ENCODE measurements at regions of chr1 and their contacts with region 1.

Region 1: DNA sequence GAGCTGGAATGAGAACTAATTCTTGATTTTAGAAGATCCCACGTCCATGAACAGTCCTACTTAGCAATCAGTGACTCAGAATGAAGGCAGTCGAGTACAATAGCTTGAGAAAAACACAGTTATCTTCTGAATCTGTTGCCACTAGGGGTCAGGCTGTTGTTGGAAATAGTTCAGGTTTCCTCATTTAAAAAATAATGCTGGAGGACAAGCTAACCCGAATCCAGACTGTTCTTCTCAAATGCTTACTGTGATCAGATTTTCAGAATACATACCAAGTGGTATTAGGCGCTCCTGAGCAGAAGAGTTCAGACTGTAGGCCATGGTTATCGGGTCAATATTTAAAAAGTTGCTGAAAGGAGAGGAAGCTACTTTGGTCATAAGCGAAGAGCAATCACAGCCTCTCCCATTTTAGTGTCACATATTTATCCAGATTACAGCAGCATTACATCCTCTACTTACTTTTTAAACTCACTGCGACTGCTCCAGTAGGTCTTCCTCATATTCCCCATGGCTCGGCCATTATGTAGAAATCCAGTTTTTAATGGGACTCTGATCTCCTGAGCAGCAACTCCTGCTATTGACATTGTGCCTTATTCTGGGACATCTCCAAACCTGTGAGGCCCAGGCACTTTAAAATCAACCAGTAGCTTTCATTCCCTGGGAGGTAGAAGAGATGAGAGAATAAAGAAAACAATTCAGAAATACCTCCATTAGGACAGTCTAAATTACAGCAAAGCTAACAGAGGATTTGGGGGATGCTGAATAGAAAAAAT is 10.9 kb downstream of the ERRFI1 start:
- DNase-seq: peak in 4 of 5 donors; percentile 55 to 59 (median 58)
- H3K4me3 ChIP-seq: no peak overlapping the region
- H3K4me3 Mint-ChIP-seq: no peak overlapping the region
- H3K27ac ChIP-seq: no peak overlapping the region
- H3K27ac Mint-ChIP-seq: no peak overlapping the region
- H3K4me1 ChIP-seq: no peaks in the 10 kb centered on the region
- H3K4me1 Mint-ChIP-seq: peaks cover 0 to 1% (median under 1%) of the 10 kb centered on the region in 4 donors
- H3K27me3 ChIP-seq: no peaks in the 10 kb centered on the region
- H3K27me3 Mint-ChIP-seq: peaks cover 10 to 18% of the 10 kb centered on the region in 2 donors

Region 2: GRCh38 chr1:7983086-7983778 is 32.0 kb before region 1 on chr1:
- CTCF ChIA-PET with region 1: interaction called, 13 read pairs
- POLR2A ChIA-PET with region 1: no interaction called
- intact Hi-C with region 1: no loop called
- DNase-seq: no peak
- H3K4me3 ChIP-seq: no peak overlapping the region
- H3K4me3 Mint-ChIP-seq: no peak overlapping the region
- H3K27ac ChIP-seq: no peak overlapping the region
- H3K27ac Mint-ChIP-seq: peak overlapping the region in 1 of 7 donors; percentile 62
- H3K4me1 ChIP-seq: peaks cover 5% of the 10 kb centered on the region
- H3K4me1 Mint-ChIP-seq: peaks cover 6 to 10% (median 8%) of the 10 kb centered on the region in 4 donors
- H3K27me3 ChIP-seq: no peaks in the 10 kb centered on the region
- H3K27me3 Mint-ChIP-seq: no peaks in the 10 kb centered on the region

Region 3: GRCh38 chr1:8174807-8175206 is 159.6 kb after region 1 on chr1:
- CTCF ChIA-PET with region 1: no interaction called
- POLR2A ChIA-PET with region 1: no interaction called
- intact Hi-C with region 1: no loop called
- DNase-seq: no peak
- H3K4me3 ChIP-seq: no peak overlapping the region
- H3K4me3 Mint-ChIP-seq: no peak overlapping the region
- H3K27ac ChIP-seq: no peak overlapping the region
- H3K27ac Mint-ChIP-seq: no peak overlapping the region
- H3K4me1 ChIP-seq: peaks cover 9% of the 10 kb centered on the region
- H3K4me1 Mint-ChIP-seq: peaks cover 8 to 18% (median 12%) of the 10 kb centered on the region in 4 donors
- H3K27me3 ChIP-seq: no peaks in the 10 kb centered on the region
- H3K27me3 Mint-ChIP-seq: no peaks in the 10 kb centered on the region

Region 4: DNA sequence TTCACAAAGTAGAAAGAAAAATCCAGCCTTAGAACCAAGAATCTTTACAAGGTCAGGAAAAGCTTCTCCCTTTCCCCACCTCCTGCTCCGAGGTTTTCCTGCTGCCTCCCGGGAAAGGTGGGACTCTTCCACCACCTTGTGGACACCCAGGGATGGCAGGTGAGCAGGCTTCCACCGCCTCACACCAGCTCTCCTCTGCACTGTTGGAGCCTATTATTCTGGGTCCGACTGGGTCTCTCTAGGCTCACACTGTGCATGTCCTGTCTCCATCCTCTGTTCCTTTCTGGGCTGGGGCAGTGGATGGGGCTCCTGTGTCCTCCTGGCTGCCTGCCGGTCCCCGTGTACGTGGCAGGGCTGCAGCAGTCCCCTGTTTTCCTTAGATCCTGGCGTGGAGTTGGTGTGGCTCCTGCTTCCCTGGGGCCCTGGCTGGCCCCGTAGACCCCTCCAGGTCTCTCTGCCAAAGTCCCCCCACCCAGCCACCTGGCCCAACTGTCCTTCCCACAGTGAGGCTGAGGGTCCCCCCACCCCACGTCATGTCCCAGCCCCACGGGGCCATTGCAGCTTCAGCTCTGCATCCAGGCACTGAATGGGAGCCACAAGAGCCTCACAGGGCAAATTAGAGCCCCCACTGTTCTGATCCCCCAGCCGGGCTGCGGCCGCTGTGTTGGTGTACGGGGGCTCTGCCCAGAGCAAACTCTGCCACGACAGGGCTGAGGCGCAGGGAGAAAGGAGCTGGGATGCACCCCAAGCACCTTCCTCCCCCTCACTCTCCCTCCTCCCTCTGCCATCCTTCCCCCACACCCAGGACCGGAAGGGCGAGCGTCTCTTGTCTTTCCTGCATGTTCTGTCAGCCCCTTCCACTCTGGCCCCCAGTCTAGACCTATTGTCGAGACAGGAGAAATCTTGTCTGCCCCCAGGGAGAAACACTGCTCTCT is 299.4 kb after region 1 on chr1:
- CTCF ChIA-PET with region 1: interaction called, 147 read pairs
- POLR2A ChIA-PET with region 1: interaction called, 5 read pairs
- intact Hi-C with region 1: loop called (anchors 1 kb)
- DNase-seq: peak; percentile 44 to 53 (median 50)
- H3K4me3 ChIP-seq: no peak overlapping the region
- H3K4me3 Mint-ChIP-seq: peak overlapping the region in 1 of 8 donors; percentile 55
- H3K27ac ChIP-seq: no peak overlapping the region
- H3K27ac Mint-ChIP-seq: peak overlapping the region in 1 of 7 donors; percentile 69
- H3K4me1 ChIP-seq: peaks cover 11% of the 10 kb centered on the region
- H3K4me1 Mint-ChIP-seq: peaks cover 4 to 30% (median 16%) of the 10 kb centered on the region in 4 donors
- H3K27me3 ChIP-seq: peaks cover 8% of the 10 kb centered on the region
- H3K27me3 Mint-ChIP-seq: peaks cover 16 to 24% of the 10 kb centered on the region in 2 donors

Region 5: GRCh38 chr1:8858888-8859706 is 843.9 kb after region 1 on chr1:
- CTCF ChIA-PET with region 1: no interaction called
- POLR2A ChIA-PET with region 1: no interaction called
- intact Hi-C with region 1: no loop called
- DNase-seq: peak; percentile 50 to 58 (median 55)
- H3K4me3 ChIP-seq: no peak overlapping the region
- H3K4me3 Mint-ChIP-seq: peak overlapping the region in 5 of 8 donors; percentile 2 to 43 (median 6)
- H3K27ac ChIP-seq: no peak overlapping the region
- H3K27ac Mint-ChIP-seq: peak overlapping the region; percentile 64 to 91 (median 76)
- H3K4me1 ChIP-seq: peaks cover 10% of the 10 kb centered on the region
- H3K4me1 Mint-ChIP-seq: peaks cover 10 to 32% (median 20%) of the 10 kb centered on the region in 4 donors
- H3K27me3 ChIP-seq: no peaks in the 10 kb centered on the region
- H3K27me3 Mint-ChIP-seq: no peaks in the 10 kb centered on the region